ENCODE measurements at regions of chr6 and their contacts with region 1.

Region 1: DNA sequence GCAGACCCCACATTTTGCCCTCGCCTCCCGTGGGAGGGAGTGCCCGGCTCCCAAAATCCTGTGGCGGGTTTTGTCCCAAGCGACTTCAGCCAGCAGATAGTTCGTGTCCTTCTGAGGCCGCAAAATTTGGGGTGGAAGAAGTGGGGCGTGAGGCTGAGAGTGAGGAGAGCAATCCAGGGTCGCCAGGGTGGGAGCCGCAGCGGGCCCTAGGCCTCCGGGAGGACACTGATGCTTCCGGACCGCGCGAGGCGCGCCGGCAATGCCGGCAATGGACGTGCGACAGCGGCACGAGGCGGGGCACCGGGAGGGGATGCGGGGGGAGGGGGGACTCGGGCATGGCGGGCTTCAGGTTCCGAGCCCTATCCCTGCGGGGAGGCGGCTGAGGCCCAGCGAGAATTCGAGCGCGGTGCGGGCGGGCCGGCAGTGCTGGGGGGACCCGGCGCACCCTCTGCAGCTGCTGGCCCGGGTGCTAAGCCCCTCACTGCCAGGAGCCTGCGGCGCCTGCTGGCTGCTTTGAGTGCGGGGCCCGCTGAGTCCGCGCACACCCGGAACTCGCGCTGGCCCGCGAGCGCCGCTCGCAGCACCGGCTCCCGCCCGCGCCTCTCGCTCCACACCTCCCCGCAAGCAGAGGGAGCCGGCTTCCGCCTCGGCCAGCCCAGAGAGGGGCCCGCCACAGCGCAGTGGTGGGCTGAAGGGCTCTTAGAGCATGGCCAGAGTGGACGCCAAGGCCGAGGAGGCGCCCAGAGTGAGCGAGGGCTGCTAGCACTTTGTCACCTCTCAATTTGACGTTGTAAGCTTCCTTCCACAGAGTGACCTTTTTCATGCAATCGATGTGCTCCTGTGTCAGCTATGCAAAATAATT is 143.8 kb downstream of the LPA start:
- DNase-seq: peak; percentile 70 to 89 (median 80)
- H3K4me3 ChIP-seq: peak overlapping the region; percentile 55 to 86 (median 76)
- H3K27ac ChIP-seq: peak overlapping the region in 58 of 59 donors; percentile 44 to 94 (median 82)
- H3K27me3 ChIP-seq: no peaks in the 10 kb centered on the region
- CTCF ChIP-seq: peak in 46 of 56 donors; percentile 2 to 97 (median 52)

Region 2: GRCh38 chr6:160248538-160248937 is 271.7 kb before region 1 on chr6:
- intact Hi-C with region 1: no loop called
- DNase-seq: no peak
- H3K4me3 ChIP-seq: no peak overlapping the region
- H3K27ac ChIP-seq: no peak overlapping the region
- H3K27me3 ChIP-seq: peaks cover 0 to 12% (median 0%) of the 10 kb centered on the region in 45 donors
- CTCF ChIP-seq: no peak

Region 3: GRCh38 chr6:160421854-160422253 is 98.4 kb before region 1 on chr6:
- intact Hi-C with region 1: no loop called
- DNase-seq: peak in 5 of 10 donors; percentile 28 to 58 (median 39)
- H3K4me3 ChIP-seq: no peak overlapping the region
- H3K27ac ChIP-seq: peak overlapping the region in 1 of 59 donors; percentile 9
- H3K27me3 ChIP-seq: peaks cover 0 to 5% (median 0%) of the 10 kb centered on the region in 45 donors
- CTCF ChIP-seq: no peak

Region 4: DNA sequence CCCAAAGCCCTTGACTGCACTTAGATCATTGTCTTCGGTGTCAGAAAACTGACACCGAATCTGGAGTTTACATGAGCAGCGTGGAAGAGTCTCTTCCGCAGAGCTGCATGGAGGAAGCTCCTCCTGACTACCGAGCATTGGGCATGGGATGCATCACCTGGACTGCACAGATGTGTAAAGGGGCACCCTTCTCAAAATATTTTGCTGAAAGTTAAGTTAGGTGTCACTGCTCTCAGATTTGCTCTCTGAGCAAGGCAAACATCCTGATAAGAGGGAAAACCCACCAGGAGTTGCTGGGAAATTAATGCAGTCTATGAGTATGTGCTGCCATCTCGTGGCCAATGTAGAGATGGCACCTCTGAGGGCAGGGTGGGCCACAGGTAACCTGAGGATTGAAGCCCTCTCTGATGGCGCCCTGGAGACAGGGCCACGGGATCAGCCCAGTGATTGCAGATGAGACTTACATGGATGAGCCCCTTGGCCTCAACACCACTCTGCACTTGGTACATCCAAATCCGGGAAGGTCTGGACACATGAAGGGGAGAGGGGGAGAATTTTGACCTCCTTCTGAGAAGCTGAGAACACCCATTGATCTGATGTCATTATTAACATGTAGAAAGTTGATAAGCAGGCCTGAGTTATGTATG is 13.9 kb after region 1 on chr6:
- intact Hi-C with region 1: loop called (anchors 1 kb)
- DNase-seq: peak in 9 of 10 donors; percentile 16 to 68 (median 47)
- H3K4me3 ChIP-seq: peak overlapping the region in 42 of 59 donors; percentile 1 to 59 (median 30)
- H3K27ac ChIP-seq: no peak overlapping the region
- H3K27me3 ChIP-seq: peaks cover 0 to 3% (median 0%) of the 10 kb centered on the region in 45 donors
- CTCF ChIP-seq: peak; percentile 85 to 99 (median 96)

Measured in dorsolateral prefrontal cortex (tissue), 120 donors.